Heart right ventricle (tissue), 16 donors: ENCODE measurements at regions of chr13 and their contacts with region 1.

Region 1: GRCh38 chr13:99264051-99264450 is 5.9 kb upstream of the GPR18 start:
- DNase-seq: no peak
- ATAC-seq: peak in 3 of 8 donors; percentile 29 to 43 (median 30)
- H3K4me3 ChIP-seq: no peak overlapping the region
- H3K27ac ChIP-seq: peak overlapping the region in 3 of 10 donors; percentile 7 to 42 (median 19)
- H3K4me1 ChIP-seq: peaks cover 0 to 24% (median 18%) of the 10 kb centered on the region in 9 donors
- H3K27me3 ChIP-seq: no peaks in the 10 kb centered on the region
- CTCF ChIP-seq: no peak

Region 2: DNA sequence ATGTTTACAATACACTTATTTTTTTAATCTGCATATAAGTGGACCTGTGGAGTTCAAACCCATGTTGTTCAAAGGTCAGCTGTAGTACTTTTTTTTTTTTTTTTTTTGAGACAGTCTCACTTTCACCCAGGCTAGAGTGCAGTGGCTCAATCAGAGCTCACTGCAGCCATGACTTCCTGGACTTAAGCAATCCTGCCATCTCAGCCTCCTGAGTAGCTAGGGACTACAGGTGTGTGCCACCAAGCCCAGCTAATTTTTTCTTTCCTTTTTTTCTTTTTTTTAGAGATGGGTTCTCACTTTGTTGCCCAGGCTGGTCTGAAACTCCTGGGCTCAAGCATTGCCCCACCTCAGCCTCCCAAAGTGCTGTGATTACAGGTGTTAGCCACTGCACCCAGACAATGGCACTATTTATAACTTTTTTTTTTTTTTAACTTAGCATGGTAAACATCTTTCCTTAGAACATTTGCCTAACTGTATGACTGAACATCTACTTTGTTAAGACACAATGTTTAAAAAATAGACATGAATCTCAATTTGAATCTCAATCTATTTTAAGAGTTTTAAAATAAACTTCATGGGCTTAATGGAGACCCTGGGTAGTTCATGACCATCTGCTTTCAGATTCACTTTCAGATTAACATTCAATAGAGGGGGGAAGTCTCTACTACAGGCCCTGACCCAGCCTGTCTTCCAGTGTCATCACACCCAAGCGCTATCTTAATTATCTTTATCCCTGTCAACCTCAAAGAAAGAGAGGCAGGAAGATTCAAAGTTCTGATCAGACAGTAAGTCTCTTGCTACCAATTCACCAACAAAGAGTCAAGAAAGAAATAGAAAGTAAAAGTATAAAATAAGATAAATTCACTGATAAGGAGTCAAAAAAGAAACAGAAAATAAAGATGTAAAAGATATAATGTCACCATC is 188.5 kb before region 1 on chr13:
- intact Hi-C with region 1: no loop called
- DNase-seq: no peak
- ATAC-seq: no peak
- H3K4me3 ChIP-seq: no peak overlapping the region
- H3K27ac ChIP-seq: peak overlapping the region in 1 of 10 donors; percentile 45
- H3K4me1 ChIP-seq: peaks cover 0 to 28% (median 6%) of the 10 kb centered on the region in 9 donors
- H3K27me3 ChIP-seq: peaks cover 0 to 62% (median 0%) of the 10 kb centered on the region in 7 donors
- CTCF ChIP-seq: no peak

Region 3: DNA sequence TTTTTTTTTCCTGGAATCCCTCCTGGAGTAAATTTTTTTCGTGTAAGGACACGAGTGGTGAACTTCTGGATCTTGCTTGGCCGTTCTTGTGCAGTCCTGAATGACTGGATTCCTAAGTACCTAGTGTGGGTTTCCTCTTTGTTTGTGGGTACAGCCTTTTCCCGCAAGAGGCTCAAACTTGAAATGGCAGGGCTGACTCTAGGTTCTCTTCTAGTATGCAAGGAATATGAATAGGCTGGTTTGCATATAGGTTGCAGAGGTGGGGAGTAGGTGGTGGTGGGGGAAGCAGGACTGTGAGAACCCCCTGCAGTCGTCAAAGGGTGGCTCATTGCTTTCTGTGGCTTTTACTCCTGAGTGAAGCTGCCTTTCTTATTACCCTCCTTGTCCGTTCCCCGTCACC is 49.8 kb before region 1 on chr13:
- intact Hi-C with region 1: loop called in 2 of 10 experiments (anchors 5 kb)
- DNase-seq: no peak
- ATAC-seq: no peak
- H3K4me3 ChIP-seq: no peak overlapping the region
- H3K27ac ChIP-seq: peak overlapping the region in 4 of 10 donors; percentile 17 to 80 (median 50)
- H3K4me1 ChIP-seq: peaks cover 2 to 47% (median 39%) of the 10 kb centered on the region in 9 donors
- H3K27me3 ChIP-seq: no peaks in the 10 kb centered on the region
- CTCF ChIP-seq: no peak

Region 4: GRCh38 chr13:99484473-99484872 is 220.4 kb after region 1 on chr13:
- intact Hi-C with region 1: no loop called
- DNase-seq: no peak
- ATAC-seq: peak in 1 of 8 donors; percentile 44
- H3K4me3 ChIP-seq: no peak overlapping the region
- H3K27ac ChIP-seq: peak overlapping the region in 1 of 10 donors; percentile 26
- H3K4me1 ChIP-seq: peaks cover 0 to 14% (median 0%) of the 10 kb centered on the region in 9 donors
- H3K27me3 ChIP-seq: no peaks in the 10 kb centered on the region
- CTCF ChIP-seq: no peak